ENCODE measurements at regions of chr2 and their contacts with region 1.

Region 1: DNA sequence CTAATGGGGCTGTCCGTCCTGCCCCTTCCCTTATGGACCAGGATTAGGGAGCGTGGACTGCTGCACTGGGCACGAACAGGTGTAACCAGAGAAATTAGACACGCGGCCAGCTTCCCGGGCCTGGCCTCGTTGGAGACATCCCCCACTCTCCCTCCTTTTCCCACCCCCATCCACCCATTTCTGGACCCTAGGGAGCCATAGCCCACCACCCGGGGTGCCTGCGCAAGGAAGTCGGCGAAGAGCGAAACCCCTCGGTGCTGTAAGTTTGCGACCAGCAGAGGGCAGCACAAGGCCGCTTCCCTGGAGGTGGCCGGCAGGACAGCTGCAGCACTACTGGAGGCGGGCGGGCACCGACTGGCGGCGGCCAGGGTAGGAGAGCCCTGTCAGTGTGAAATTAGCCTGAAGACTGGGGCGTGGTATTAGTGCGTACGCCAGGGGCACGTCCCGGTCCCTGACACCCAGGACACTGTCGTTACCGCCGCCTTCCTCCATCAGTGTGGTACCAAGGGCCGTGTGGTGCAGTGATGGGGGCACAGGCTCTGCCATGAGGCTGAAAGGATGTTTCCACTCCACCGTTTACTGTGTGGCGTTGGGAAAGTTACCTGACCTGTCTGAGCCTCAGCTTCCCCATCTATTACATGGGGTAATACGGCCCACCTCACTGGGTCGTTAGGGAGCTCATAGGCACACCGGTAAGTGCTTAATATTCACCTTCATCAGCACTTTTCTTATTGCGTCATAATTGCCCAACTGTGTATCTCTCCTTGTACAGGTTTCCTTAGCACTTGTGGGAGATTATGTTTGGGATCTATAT is 36.0 kb upstream of the CD207 start:
- DNase-seq: peak; percentile 52 to 79 (median 64)
- H3K4me3 ChIP-seq: no peak overlapping the region
- H3K4me3 Mint-ChIP-seq: peak overlapping the region in 4 of 7 donors; percentile 22 to 61 (median 44)
- H3K27ac ChIP-seq: no peak overlapping the region
- H3K27ac Mint-ChIP-seq: peak overlapping the region in 1 of 8 donors; percentile 17
- H3K4me1 ChIP-seq: peaks cover 3% of the 10 kb centered on the region
- H3K4me1 Mint-ChIP-seq: peaks cover 5 to 7% (median 7%) of the 10 kb centered on the region in 3 donors
- H3K27me3 ChIP-seq: peaks cover 14% of the 10 kb centered on the region
- H3K27me3 Mint-ChIP-seq: peaks cover 43 to 58% of the 10 kb centered on the region in 2 donors

Region 2: GRCh38 chr2:70919672-70920366 is 48.2 kb after region 1 on chr2:
- CTCF ChIA-PET with region 1: interaction called, 21 read pairs
- POLR2A ChIA-PET with region 1: no interaction called
- DNase-seq: peak; percentile 31 to 62 (median 58)
- H3K4me3 ChIP-seq: no peak overlapping the region
- H3K4me3 Mint-ChIP-seq: no peak overlapping the region
- H3K27ac ChIP-seq: no peak overlapping the region
- H3K27ac Mint-ChIP-seq: no peak overlapping the region
- H3K4me1 ChIP-seq: no peaks in the 10 kb centered on the region
- H3K4me1 Mint-ChIP-seq: peaks cover 0 to 1% (median 0%) of the 10 kb centered on the region in 3 donors
- H3K27me3 ChIP-seq: peaks cover 10% of the 10 kb centered on the region
- H3K27me3 Mint-ChIP-seq: peaks cover 20 to 42% of the 10 kb centered on the region in 2 donors

Region 3: DNA sequence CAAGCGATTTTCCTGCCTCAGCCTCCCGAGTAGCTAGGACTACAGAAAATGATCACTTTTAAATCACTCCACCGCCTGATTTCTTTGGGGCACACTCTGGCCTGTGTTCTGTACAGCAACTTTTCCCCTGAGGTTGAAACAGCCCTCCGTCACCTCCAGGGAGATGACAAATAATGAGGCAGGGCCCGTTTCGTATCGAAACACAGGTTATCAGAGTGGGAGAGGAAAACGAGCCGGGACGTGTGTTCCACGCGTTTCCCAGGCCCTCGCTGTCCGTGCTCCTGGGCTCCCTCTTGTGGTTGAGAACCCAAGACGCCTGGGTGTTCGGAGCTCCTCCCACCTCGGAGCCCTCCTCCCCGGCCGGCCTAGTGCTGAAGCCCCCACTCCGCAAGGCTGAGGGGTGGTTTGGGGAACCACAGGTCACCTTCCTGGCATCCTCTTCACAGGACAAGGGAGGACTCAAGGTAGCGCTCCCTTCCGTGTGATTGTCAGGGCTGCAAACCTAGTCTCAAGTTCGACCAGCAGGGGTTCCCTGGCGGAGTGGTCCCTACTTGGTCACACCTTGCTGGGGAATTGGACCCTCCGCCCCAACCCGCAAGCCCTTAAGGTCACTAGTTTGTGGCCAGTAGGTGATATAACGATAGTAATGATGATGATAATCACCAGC is 76.9 kb after region 1 on chr2:
- CTCF ChIA-PET with region 1: interaction called, 21 read pairs
- POLR2A ChIA-PET with region 1: no interaction called
- DNase-seq: peak; percentile 56 to 78 (median 68)
- H3K4me3 ChIP-seq: peak overlapping the region; percentile 40
- H3K4me3 Mint-ChIP-seq: peak overlapping the region; percentile 53 to 89 (median 84)
- H3K27ac ChIP-seq: no peak overlapping the region
- H3K27ac Mint-ChIP-seq: peak overlapping the region in 6 of 8 donors; percentile 12 to 89 (median 73)
- H3K4me1 ChIP-seq: peaks cover 13% of the 10 kb centered on the region
- H3K4me1 Mint-ChIP-seq: peaks cover 14 to 17% (median 17%) of the 10 kb centered on the region in 3 donors
- H3K27me3 ChIP-seq: no peaks in the 10 kb centered on the region
- H3K27me3 Mint-ChIP-seq: peaks cover 16 to 31% of the 10 kb centered on the region in 2 donors

Measured in CD8-positive, alpha-beta memory T cell (primary cell).